ENCODE measurements at regions of chr1 and their contacts with region 1.

Region 1: DNA sequence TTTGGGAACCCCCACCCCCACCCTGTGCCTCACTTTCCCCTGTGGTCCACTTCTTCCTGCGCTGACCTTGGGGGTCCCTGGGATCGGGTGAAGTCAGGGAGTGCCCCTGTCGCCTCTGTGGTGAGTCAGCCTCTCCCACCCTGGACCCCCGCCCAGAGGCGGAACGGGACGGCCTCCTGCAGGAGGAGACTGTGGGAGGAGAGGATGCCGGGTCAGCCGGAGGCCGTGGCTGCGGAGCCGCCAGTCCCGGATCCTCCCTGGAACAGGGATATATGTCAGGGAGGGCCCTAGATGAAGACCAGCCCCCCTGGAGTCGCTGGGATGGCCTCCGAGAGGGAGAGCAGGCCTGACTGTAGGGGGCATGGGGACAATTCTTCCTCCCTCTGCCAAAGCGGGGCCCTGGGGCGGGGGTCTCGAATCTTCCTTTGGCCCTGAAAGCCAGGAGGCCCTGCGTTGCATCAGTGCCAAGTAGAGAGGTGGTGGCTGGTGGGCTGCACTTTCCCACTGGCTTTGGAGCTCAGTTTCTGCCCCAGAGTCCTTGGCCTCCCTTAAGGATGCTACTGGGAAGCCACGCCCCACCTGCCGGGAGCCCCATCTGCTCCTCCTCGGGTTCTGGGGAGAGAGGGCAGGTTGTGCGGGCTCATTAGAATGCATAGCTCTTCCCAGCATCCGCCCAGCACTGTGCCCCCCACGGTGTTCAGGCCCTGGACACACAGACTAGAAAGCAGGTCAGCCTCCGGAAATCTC is 930 bp downstream of the ARHGEF10L start:
- H3K4me3 ChIP-seq: peak overlapping the region; percentile 69
- H3K27ac ChIP-seq: peak overlapping the region; percentile 87
- H3K4me1 ChIP-seq: peaks cover 9% of the 10 kb centered on the region
- CTCF ChIP-seq: no peak; the same call in 1 of the 2 replicates

Region 2: GRCh38 chr1:17551755-17552234 is 11.4 kb after region 1 on chr1:
- CTCF ChIA-PET with region 1: interaction called, 4 read pairs
- POLR2A ChIA-PET with region 1: interaction called, 13 read pairs
- H3K4me3 ChIP-seq: no peak overlapping the region
- H3K27ac ChIP-seq: no peak overlapping the region
- H3K4me1 ChIP-seq: peaks cover 4% of the 10 kb centered on the region; the same call in 1 of the 2 replicates
- CTCF ChIP-seq: no peak

Measured in HEK293 (cell line).